HEK293 (cell line): ENCODE measurements at regions of chr2 and their contacts with region 1.

Region 1: DNA sequence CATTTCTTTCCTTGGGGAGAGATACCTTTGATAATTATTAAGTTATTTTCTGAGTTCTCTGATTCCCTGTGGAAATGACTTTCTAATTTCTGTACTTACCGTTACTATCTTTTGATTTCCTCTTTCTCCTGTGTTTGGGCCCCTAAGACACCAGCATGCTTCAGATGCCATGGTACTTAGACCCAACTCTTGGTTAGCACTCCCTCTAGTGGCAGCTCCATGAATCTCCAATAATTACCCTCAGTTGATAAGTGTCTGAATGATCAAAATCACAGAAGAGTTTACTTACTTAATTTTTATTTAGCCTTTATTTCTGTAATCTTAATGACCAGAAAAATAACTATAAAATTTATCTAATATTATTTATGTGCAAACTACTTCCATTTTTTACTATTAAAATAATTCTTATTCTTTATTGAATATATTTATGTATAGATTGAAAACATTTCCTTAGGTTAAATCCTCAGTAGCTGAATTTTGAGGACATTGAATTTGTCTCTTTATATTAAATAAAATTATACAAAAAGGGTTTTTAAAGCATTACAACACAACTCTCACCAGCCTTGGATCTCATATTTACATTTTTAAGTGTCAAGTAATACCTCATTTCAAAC is 300.4 kb downstream of the KCNS3 start:
- H3K4me3 ChIP-seq: no peak overlapping the region
- H3K27ac ChIP-seq: no peak overlapping the region
- H3K4me1 ChIP-seq: 0 out of 2 replicates have a peak, but pooled peaks cover 3% of the 10 kb centered on the region
- CTCF ChIP-seq: no peak

Region 2: DNA sequence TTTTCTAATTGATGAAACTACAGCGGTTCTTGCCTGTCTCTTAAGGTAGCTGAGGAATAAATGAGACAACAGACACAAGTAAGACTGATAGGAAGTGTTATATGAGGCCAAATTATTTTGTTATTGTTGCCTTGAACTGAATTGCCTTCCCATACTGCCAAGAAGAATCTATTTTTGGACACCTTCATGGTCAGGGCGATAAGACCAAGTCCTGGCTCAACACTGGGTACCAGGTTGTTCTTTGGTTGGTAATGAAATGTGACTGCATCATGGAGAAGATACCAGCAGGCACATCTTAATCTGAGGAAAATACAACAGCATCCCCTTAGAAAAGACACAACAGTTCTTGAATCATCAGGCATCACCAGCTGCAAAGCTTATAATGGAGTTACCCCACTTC is 338.9 kb before region 1 on chr2:
- CTCF ChIA-PET with region 1: no interaction called
- POLR2A ChIA-PET with region 1: no interaction called
- H3K4me3 ChIP-seq: no peak overlapping the region
- H3K27ac ChIP-seq: no peak overlapping the region
- H3K4me1 ChIP-seq: no peaks in the 10 kb centered on the region
- CTCF ChIP-seq: no peak

Region 3: GRCh38 chr2:17851731-17852585 is 326.9 kb before region 1 on chr2:
- CTCF ChIA-PET with region 1: interaction called, 14 read pairs
- POLR2A ChIA-PET with region 1: no interaction called
- H3K4me3 ChIP-seq: no peak overlapping the region
- H3K27ac ChIP-seq: no peak overlapping the region
- H3K4me1 ChIP-seq: no peaks in the 10 kb centered on the region
- CTCF ChIP-seq: peak; percentile 71; the same call in 1 of the 2 replicates

Region 4: DNA sequence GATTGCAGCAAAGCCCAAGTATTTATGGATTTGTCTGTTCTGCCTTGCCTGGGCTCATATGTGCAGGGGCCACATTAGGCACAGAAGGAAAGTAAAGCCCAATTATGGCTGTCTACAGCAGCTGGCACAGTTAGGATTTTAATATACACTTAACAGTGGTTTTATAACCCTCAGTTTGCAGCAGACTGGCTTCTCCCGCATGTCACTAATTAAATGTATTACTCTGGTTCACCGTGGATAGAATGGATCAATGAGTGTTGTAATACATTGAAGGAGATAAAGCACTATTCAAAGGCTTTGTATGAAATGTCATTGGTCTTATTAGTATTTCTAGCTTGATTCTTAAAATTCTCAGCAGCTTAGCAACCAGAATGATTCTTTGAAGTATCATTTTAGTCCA is 19.8 kb after region 1 on chr2:
- CTCF ChIA-PET with region 1: interaction called, 12 read pairs
- POLR2A ChIA-PET with region 1: no interaction called
- H3K4me3 ChIP-seq: no peak overlapping the region
- H3K27ac ChIP-seq: no peak overlapping the region
- H3K4me1 ChIP-seq: no peaks in the 10 kb centered on the region
- CTCF ChIP-seq: no peak

Region 5: GRCh38 chr2:18378020-18378653 is 199.3 kb after region 1 on chr2:
- CTCF ChIA-PET with region 1: interaction called, 21 read pairs
- POLR2A ChIA-PET with region 1: no interaction called
- H3K4me3 ChIP-seq: no peak overlapping the region
- H3K27ac ChIP-seq: no peak overlapping the region
- H3K4me1 ChIP-seq: 0 out of 2 replicates have a peak, but pooled peaks cover under 1% of the 10 kb centered on the region
- CTCF ChIP-seq: peak; percentile 53; the same call in 1 of the 2 replicates